Transverse colon (tissue), 4 donors: ENCODE measurements at regions of chr4 and their contacts with region 1.

Region 1: DNA sequence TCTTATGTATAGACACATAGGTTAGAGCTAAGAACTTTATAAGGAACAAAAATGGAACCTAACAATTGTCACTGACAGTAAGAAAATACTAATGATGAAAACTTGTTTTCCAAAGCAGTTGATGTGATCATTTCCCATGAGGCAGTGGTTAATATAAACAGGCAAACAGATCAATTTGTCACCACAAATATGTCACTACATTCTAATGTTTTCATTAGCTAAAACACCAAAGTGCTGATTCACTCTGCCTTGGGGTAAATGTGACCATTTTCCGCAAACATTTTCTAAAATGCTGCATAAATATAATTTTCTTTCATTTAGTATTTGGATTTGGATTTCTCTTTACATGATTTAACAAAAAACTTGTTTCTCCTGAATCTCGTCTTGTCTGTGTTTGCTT is 408.9 kb upstream of the CTSO start:
- DNase-seq: no peak
- H3K4me3 ChIP-seq: no peak overlapping the region
- H3K27ac ChIP-seq: no peak overlapping the region
- H3K4me1 ChIP-seq: no peaks in the 10 kb centered on the region
- H3K27me3 ChIP-seq: no peaks in the 10 kb centered on the region
- CTCF ChIP-seq: no peak
- EP300 ChIP-seq: no peak
- POLR2A ChIP-seq: no peak

Region 2: GRCh38 chr4:155227131-155227530 is 1135.5 kb before region 1 on chr4:
- in situ Hi-C with region 1: no loop called
- intact Hi-C with region 1: loop called (anchors 5 kb)
- DNase-seq: no peak
- H3K4me3 ChIP-seq: no peak overlapping the region
- H3K27ac ChIP-seq: no peak overlapping the region
- H3K4me1 ChIP-seq: no peaks in the 10 kb centered on the region
- H3K27me3 ChIP-seq: no peaks in the 10 kb centered on the region
- CTCF ChIP-seq: no peak
- EP300 ChIP-seq: no peak
- POLR2A ChIP-seq: no peak

Region 3: DNA sequence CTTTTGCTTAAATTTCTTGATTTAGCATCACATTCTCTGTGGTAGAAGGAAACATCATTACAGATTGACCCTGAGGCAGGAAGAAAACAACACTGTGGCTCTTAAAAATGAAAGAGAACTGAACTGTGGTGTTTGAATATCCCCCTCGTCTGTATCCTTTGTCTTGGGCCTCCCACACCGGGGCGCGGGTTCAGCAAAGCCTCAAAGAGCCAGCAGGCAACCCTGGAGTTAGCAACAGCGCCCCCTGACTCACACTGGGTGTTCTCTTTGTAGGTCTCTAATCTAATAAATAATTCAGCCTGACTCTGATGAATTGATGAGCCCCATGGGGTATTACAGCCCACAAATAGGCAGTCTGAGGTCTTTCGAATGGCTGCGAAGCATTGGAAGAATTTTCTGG is 362.9 kb before region 1 on chr4:
- in situ Hi-C with region 1: no loop called
- intact Hi-C with region 1: no loop called
- DNase-seq: no peak
- H3K4me3 ChIP-seq: no peak overlapping the region
- H3K27ac ChIP-seq: no peak overlapping the region
- H3K4me1 ChIP-seq: no peaks in the 10 kb centered on the region
- H3K27me3 ChIP-seq: no peaks in the 10 kb centered on the region
- CTCF ChIP-seq: no peak
- EP300 ChIP-seq: no peak
- POLR2A ChIP-seq: no peak

Region 4: DNA sequence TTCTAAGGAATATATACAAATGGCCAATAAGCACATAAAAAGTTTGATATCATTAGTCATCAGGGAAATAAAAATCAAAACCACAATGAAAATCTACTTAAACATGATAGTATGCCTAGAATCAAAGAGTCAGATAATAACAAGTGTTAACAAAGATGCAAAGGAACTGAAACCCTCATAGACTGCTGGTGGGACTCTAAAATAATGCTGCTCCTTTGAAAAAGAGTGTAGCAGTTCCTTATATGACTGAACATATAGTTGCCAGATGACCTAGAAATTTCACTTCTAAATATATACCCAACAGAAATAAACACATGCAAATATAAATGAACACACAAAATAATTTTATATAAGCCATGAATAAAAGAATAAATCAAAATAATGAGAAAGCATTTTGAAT is 203.8 kb before region 1 on chr4:
- in situ Hi-C with region 1: no loop called
- intact Hi-C with region 1: no loop called
- DNase-seq: no peak
- H3K4me3 ChIP-seq: no peak overlapping the region
- H3K27ac ChIP-seq: no peak overlapping the region
- H3K4me1 ChIP-seq: no peaks in the 10 kb centered on the region
- H3K27me3 ChIP-seq: no peaks in the 10 kb centered on the region
- CTCF ChIP-seq: no peak
- EP300 ChIP-seq: no peak
- POLR2A ChIP-seq: no peak

Region 5: DNA sequence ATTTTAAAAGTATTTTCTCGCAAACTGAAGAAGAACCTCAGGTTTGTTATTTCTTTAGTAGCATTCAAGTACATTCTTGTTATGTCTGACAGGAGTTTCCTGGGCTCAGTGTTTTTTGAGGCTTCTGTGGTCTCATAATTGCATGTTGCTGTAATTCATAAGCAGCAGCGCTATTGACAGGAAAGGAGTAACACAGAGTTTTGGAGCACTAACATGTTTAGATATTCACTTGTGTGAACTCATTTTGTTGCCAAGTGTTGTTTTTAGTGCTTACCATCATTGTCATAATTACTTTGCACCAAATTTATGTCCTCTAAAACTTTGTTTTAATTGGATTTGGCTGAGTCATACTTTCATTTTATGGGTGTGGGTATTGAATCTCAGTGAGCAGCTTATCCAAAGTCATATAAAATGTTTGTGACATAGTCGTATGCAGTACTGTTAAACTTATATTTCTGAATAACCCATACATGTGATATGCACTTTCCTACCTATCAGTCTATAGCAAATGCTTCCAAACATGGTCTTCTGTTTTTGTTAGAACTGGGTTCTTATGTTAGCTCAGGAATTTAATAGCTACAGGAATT is 50.2 kb before region 1 on chr4:
- in situ Hi-C with region 1: no loop called
- intact Hi-C with region 1: no loop called
- DNase-seq: no peak
- H3K4me3 ChIP-seq: no peak overlapping the region
- H3K27ac ChIP-seq: no peak overlapping the region
- H3K4me1 ChIP-seq: peaks cover 0 to 10% (median 0%) of the 10 kb centered on the region in 4 donors
- H3K27me3 ChIP-seq: no peaks in the 10 kb centered on the region
- CTCF ChIP-seq: no peak
- EP300 ChIP-seq: no peak
- POLR2A ChIP-seq: no peak